ENCODE measurements at regions of chr1 and their contacts with region 1.

Region 1: GRCh38 chr1:226281058-226281457 is 27.9 kb downstream of the LIN9 start:
- DNase-seq: no peak
- H3K4me3 Mint-ChIP-seq: no peak overlapping the region
- H3K27ac Mint-ChIP-seq: no peak overlapping the region
- H3K4me1 Mint-ChIP-seq: no peaks in the 10 kb centered on the region
- H3K27me3 Mint-ChIP-seq: no peaks in the 10 kb centered on the region
- CTCF ChIP-seq: no peak

Region 2: GRCh38 chr1:226233293-226233692 is 47.8 kb before region 1 on chr1:
- CTCF ChIA-PET with region 1: no interaction called
- intact Hi-C with region 1: loop called (anchors 5 kb)
- DNase-seq: no peak
- H3K4me3 Mint-ChIP-seq: no peak overlapping the region
- H3K27ac Mint-ChIP-seq: no peak overlapping the region
- H3K4me1 Mint-ChIP-seq: no peaks in the 10 kb centered on the region
- H3K27me3 Mint-ChIP-seq: no peaks in the 10 kb centered on the region
- CTCF ChIP-seq: no peak